ENCODE measurements at regions of chr17 and their contacts with region 1.

Region 1: DNA sequence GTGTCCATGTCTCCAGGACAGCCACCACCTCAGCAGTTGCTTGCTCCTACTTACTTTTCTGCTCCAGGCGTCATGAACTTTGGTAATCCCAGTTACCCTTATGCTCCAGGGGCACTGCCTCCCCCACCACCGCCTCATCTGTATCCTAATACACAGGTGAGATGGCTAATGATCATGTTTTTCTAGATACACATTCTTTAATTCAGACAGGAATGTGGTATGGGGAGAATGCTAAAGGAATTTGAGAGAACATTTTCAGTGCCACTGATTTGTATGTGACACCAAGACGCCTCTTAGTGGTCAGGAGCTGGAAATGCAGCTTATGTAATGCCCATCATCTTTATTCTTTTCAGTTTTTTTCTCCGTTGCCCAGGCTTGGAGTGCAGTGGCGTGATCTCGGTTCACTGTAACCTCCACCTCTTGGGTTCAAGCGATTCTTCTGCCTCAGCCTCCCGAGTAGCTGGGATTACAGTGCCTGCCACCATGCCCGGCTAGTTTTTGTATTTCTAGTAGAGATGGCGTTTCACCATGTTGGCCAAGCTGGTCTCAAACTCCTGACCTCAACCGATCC is 8.9 kb upstream of the RAPGEFL1 start:
- DNase-seq: peak; percentile 56
- ATAC-seq: peak; percentile 58
- H3K4me3 Mint-ChIP-seq: no peak overlapping the region
- H3K27ac Mint-ChIP-seq: peak overlapping the region; percentile 53
- H3K4me1 Mint-ChIP-seq: peaks cover 3% of the 10 kb centered on the region
- H3K27me3 Mint-ChIP-seq: no peaks in the 10 kb centered on the region

Region 2: GRCh38 chr17:40019140-40019991 is 149.0 kb before region 1 on chr17:
- CTCF ChIA-PET with region 1: interaction called, 12 read pairs
- DNase-seq: no peak
- ATAC-seq: no peak
- H3K4me3 Mint-ChIP-seq: no peak overlapping the region
- H3K27ac Mint-ChIP-seq: no peak overlapping the region
- H3K4me1 Mint-ChIP-seq: no peaks in the 10 kb centered on the region
- H3K27me3 Mint-ChIP-seq: no peaks in the 10 kb centered on the region

Region 3: GRCh38 chr17:40121181-40122135 is 46.9 kb before region 1 on chr17 and contains the start of gene MSL1:
- CTCF ChIA-PET with region 1: interaction called, 24 read pairs
- DNase-seq: peak; percentile 86
- ATAC-seq: peak; percentile 73
- H3K4me3 Mint-ChIP-seq: peak within 1 kb of the TSS; percentile 74
- H3K27ac Mint-ChIP-seq: peak within 1 kb of the TSS; percentile 74
- H3K4me1 Mint-ChIP-seq: peaks cover 30% of the 10 kb centered on the region
- H3K27me3 Mint-ChIP-seq: no peaks in the 10 kb centered on the region
- total RNA-seq, gene MSL1: 91.4 to 94.7 TPM

Region 4: DNA sequence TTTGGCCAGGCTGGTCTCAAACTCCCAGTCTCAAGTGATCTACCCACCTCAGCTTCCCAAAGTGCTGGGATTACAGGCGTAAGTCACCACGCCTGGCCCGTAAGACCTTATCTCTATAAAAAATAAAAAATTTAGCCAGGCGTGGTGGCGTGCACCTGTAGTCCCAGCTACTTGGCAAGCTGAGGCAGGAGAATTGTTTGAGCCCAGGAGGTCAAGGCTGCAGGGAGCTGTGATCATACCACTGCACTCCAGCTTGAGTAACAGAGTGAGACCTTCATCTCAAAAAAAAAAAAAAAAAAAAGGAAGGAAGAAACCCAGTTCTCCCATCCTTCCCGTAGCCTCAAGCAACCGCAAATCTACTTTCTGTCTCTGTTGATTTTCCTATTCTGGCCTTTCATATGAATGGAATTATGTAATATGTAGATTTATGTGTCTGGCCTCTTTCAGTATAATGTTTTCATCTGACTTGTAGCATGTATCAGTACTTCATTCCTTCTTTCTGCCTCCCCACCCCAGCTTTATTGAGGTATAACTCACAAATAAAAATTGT is 16.9 kb before region 1 on chr17:
- CTCF ChIA-PET with region 1: interaction called, 15 read pairs
- DNase-seq: no peak
- ATAC-seq: no peak
- H3K4me3 Mint-ChIP-seq: no peak overlapping the region
- H3K27ac Mint-ChIP-seq: no peak overlapping the region
- H3K4me1 Mint-ChIP-seq: peaks cover 33% of the 10 kb centered on the region
- H3K27me3 Mint-ChIP-seq: no peaks in the 10 kb centered on the region

Region 5: GRCh38 chr17:40157973-40158372 is 10.4 kb before region 1 on chr17:
- CTCF ChIA-PET with region 1: interaction called, 15 read pairs
- DNase-seq: no peak
- ATAC-seq: no peak
- H3K4me3 Mint-ChIP-seq: no peak overlapping the region
- H3K27ac Mint-ChIP-seq: peak overlapping the region; percentile 8
- H3K4me1 Mint-ChIP-seq: peaks cover 22% of the 10 kb centered on the region
- H3K27me3 Mint-ChIP-seq: no peaks in the 10 kb centered on the region

Measured in activated CD8-positive, alpha-beta memory T cell treated with anti-CD3 and anti-CD28 coated beads, Interleukin-2, amount 10 ng/mL, durations not matched to agents 7 days and 5 days (primary cell).